ENCODE measurements at regions of chr1 and their contacts with region 1.

Region 1: GRCh38 chr1:55575571-55576279 is 360.6 kb upstream of the USP24 start:
- DNase-seq: peak; percentile 27
- H3K4me3 ChIP-seq: no peak overlapping the region
- H3K27ac ChIP-seq: peak overlapping the region; percentile 56 to 65
- H3K4me1 ChIP-seq: no peaks in the 10 kb centered on the region
- H3K27me3 ChIP-seq: no peaks in the 10 kb centered on the region
- CTCF ChIP-seq: no peak
- POLR2A ChIP-seq: no peak

Region 2: DNA sequence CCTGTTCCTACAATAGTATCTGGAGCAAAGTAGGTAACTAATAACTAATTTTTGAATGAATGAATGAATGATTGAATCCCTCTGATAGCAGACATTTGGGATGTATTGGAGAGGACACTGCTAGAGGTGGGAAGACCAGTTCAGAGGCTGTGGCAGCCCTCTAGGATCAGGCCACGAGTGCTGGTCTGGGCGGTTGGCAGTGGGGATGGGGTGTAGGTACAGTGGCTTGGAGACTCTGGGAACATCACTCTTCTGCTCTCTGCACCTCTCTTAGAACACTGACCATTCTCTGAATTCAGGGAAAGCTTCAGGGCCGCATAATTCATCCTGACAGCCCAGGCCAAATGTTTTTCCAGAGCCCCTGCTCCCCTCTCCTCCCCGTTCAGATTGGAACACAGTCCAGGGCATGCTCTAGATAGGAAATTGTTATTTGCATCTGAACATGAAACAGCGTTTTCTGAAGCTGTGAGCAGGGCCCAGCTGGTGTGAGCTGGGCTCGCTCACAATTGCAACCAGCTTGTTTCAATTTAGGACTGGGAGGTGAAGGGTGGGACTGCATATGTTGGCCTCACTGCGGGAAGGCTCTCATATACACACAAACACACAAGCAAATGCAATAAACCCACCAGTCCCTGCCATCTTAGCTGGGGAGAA is 107.5 kb before region 1 on chr1:
- intact Hi-C with region 1: loop called (anchors 5 kb)
- DNase-seq: no peak
- H3K4me3 ChIP-seq: no peak overlapping the region
- H3K27ac ChIP-seq: no peak overlapping the region
- H3K4me1 ChIP-seq: no peaks in the 10 kb centered on the region
- H3K27me3 ChIP-seq: no peaks in the 10 kb centered on the region
- CTCF ChIP-seq: no peak
- POLR2A ChIP-seq: no peak

Region 3: GRCh38 chr1:55702064-55702463 is 126.3 kb after region 1 on chr1:
- intact Hi-C with region 1: loop called (anchors 5 kb)
- DNase-seq: no peak
- H3K4me3 ChIP-seq: no peak overlapping the region
- H3K27ac ChIP-seq: no peak overlapping the region
- H3K4me1 ChIP-seq: peaks cover 4% of the 10 kb centered on the region
- H3K27me3 ChIP-seq: no peaks in the 10 kb centered on the region
- CTCF ChIP-seq: peak in 3 of 4 experiments; percentile 31 to 43 (median 41)
- POLR2A ChIP-seq: no peak

Region 4: DNA sequence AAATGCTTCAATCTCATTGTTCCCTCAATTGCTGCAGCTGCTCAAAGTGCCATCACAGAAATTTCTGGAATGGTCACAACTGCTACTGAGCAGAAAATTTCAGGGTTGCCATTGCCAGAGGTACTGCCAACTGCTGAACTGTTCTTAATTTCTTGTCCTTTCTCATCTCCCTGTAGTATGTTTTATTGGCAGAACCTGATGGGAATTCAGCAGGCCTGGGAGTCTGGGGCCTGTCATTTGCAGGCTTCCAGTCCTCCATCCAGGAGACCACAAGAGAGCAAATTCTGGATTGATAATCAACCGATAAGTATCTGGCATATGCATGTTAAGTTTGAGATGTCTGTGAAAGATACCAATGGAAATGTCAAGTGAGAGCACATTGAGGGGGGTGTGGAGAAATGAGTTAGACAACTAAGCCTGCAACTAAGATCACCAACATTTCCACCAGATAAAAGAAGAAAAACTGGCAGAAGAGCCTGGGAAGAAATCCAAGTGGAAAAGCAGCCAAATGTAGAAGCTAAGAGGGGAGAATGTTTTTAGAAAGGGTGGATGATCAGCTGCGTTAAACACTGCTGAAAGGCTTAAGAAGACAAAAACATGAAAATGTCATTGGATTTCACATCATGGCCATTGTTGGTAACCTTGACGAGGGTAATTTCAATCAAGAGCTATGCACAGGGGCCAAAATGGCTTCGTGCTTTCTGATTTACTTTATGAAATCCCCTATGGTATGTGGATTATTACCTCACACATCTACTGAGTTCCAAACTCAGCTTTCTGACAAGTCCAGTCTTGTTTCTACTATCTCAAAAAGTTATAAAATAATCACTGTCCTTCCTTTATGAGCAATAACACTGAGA is 355.6 kb after region 1 on chr1:
- intact Hi-C with region 1: no loop called
- DNase-seq: no peak
- H3K4me3 ChIP-seq: no peak overlapping the region
- H3K27ac ChIP-seq: no peak overlapping the region
- H3K4me1 ChIP-seq: no peaks in the 10 kb centered on the region
- H3K27me3 ChIP-seq: no peaks in the 10 kb centered on the region
- CTCF ChIP-seq: no peak
- POLR2A ChIP-seq: no peak

Region 5: GRCh38 chr1:55965981-55966461 is 390.3 kb after region 1 on chr1:
- intact Hi-C with region 1: loop called (anchors 5 kb)
- DNase-seq: peak; percentile 11
- H3K4me3 ChIP-seq: no peak overlapping the region
- H3K27ac ChIP-seq: peak overlapping the region; percentile 48 to 50
- H3K4me1 ChIP-seq: no peaks in the 10 kb centered on the region
- H3K27me3 ChIP-seq: no peaks in the 10 kb centered on the region
- CTCF ChIP-seq: no peak
- POLR2A ChIP-seq: no peak